Lower lobe of right lung (tissue), 2 donors: ENCODE measurements at regions of chr9 and their contacts with region 1.

Region 1: GRCh38 chr9:133149126-133150107 is 14.3 kb downstream of the GBGT1 start:
- DNase-seq: peak; percentile 94
- ATAC-seq: peak; percentile 84 to 90
- H3K4me3 ChIP-seq: peak overlapping the region; percentile 77
- H3K27ac ChIP-seq: peak overlapping the region; percentile 86
- H3K4me1 ChIP-seq: peaks cover 27% of the 10 kb centered on the region
- H3K27me3 ChIP-seq: no peaks in the 10 kb centered on the region
- CTCF ChIP-seq: peak; percentile 41

Region 2: GRCh38 chr9:132970324-132971062 is 178.9 kb before region 1 on chr9:
- intact Hi-C with region 1: no loop called
- DNase-seq: no peak
- ATAC-seq: peak; percentile 46 to 74
- H3K4me3 ChIP-seq: no peak overlapping the region
- H3K27ac ChIP-seq: no peak overlapping the region
- H3K4me1 ChIP-seq: peaks cover 5% of the 10 kb centered on the region
- H3K27me3 ChIP-seq: peaks cover 4% of the 10 kb centered on the region
- CTCF ChIP-seq: no peak

Region 3: DNA sequence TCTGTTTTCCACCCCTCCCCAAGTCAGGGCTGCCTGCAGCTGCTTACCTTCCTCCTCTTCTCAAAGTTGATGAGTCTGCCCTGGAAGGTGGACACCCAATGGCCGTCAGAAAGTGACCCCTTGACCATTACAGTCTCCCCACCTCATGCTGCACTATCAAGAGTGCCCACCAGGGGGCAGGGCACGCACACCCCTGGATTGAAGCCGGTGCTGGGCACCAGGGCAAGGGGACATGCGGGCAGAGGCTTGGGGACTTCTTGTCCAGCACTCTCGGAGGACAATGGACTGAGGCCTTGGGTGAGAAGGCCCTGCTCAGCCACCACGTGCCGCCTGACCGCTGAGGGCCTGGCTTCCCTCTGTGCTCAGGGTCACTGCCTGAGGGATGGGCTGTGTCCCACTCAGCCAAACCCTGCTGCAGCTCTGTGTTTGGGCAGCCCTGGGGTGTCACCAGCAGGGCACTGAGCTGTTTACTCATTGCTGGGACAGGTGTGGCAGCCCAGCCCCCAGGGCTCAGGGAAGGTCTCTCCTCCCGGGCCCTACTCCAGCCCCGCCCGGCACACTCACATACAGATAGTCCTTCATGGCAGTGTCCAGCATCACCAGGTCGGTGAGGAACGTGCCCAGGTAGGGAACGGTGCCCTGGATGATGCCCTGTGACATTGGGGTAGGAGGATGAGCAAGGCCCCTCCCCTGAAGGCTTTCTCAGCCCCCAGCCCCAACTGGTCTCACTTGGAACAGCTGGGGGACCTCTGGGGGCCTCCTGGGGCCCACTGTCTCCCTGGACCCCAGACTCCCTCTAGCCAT is 46.0 kb before region 1 on chr9:
- intact Hi-C with region 1: loop called (anchors 5 kb)
- DNase-seq: peak; percentile 81
- ATAC-seq: peak; percentile 82 to 88
- H3K4me3 ChIP-seq: no peak overlapping the region
- H3K27ac ChIP-seq: no peak overlapping the region
- H3K4me1 ChIP-seq: no peaks in the 10 kb centered on the region
- H3K27me3 ChIP-seq: no peaks in the 10 kb centered on the region
- CTCF ChIP-seq: peak; percentile 98

Region 4: GRCh38 chr9:133301253-133302230 is 152.1 kb after region 1 on chr9:
- intact Hi-C with region 1: no loop called
- DNase-seq: no peak
- ATAC-seq: peak in 1 of 2 donors; percentile 35
- H3K4me3 ChIP-seq: no peak overlapping the region
- H3K27ac ChIP-seq: no peak overlapping the region
- H3K4me1 ChIP-seq: no peaks in the 10 kb centered on the region
- H3K27me3 ChIP-seq: peaks cover 5% of the 10 kb centered on the region
- CTCF ChIP-seq: no peak